ENCODE measurements at regions of chr10 and their contacts with region 1.

Region 1: DNA sequence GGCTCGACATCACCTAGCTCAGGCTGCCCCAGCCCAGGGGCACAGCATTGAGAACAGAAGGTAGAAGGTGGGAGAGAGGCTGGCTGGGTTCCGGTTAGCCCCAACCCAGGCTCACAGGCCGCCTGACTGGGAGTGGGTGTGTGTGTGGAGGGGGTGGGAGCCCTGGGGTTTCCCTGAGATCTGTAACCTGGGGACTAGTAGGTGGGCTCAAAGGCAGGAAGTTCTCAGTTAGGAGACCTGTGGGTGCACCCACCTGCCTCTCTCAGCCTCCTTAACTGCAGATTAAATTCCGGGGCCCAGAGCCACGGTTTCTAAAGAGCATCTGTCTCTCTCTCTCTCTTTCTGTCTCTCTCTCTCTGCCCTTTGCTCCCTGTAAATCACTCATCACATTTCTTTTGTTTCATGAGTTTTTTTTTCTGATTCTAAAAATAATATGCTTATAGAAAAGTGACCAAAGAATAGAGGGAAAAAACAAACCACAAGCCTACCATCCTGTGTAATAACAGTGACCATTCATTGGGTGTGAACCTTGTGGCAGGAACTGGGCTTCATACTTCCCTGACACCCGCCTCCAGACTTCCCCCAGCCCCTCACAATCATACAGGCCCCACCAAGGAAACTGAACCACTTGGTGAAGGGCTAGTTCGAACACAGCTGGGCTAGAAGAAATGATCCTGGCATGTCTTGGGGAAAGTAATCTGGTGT is 83.4 kb upstream of the SMNDC1 start:
- DNase-seq: no peak

Region 2: DNA sequence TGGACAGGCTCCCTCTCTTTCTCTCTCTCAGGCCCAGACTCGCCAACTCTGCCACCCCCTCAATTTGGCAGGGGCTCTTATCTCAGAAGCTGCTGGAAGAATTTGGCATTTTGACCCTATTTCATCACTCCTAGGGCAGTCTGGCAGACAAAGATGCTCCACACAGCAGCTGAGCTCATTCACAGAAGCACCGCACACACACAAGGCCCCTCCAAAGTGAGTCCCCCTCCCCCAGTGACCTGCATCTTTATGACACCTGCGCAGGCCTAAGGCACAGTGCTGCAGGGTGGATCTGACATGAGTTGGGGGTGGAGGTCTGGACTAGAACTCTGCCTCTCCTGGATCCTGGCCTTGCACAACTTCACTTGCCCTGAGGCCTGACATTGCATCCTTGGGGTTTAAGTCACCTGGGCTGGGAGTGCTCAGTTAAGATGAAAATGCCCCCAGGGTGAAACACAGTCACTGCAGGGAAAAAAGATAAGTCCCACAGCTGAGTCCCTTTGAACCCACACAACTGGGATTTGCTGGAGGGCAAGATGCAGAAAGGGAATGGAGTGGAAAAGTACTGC is 68.5 kb after region 1 on chr10:
- CTCF ChIA-PET with region 1: interaction called, 14 read pairs
- POLR2A ChIA-PET with region 1: no interaction called
- DNase-seq: no peak

Measured in HEK293T (cell line).